Activated CD8-positive, alpha-beta T cell treated with anti-CD3 and anti-CD28 coated beads, Interleukin-2, amount 10 ng/mL, durations not matched to agents 7 days and 5 days (primary cell): ENCODE measurements at regions of chr13 and their contacts with region 1.

Region 1: GRCh38 chr13:99386911-99387788 is 80.0 kb upstream of the GPR183 start:
- DNase-seq: peak; percentile 88
- ATAC-seq: peak; percentile 26
- H3K4me3 Mint-ChIP-seq: no peak overlapping the region
- H3K27ac Mint-ChIP-seq: peak overlapping the region; percentile 58
- H3K4me1 Mint-ChIP-seq: peaks cover 64% of the 10 kb centered on the region
- H3K27me3 Mint-ChIP-seq: no peaks in the 10 kb centered on the region

Region 2: DNA sequence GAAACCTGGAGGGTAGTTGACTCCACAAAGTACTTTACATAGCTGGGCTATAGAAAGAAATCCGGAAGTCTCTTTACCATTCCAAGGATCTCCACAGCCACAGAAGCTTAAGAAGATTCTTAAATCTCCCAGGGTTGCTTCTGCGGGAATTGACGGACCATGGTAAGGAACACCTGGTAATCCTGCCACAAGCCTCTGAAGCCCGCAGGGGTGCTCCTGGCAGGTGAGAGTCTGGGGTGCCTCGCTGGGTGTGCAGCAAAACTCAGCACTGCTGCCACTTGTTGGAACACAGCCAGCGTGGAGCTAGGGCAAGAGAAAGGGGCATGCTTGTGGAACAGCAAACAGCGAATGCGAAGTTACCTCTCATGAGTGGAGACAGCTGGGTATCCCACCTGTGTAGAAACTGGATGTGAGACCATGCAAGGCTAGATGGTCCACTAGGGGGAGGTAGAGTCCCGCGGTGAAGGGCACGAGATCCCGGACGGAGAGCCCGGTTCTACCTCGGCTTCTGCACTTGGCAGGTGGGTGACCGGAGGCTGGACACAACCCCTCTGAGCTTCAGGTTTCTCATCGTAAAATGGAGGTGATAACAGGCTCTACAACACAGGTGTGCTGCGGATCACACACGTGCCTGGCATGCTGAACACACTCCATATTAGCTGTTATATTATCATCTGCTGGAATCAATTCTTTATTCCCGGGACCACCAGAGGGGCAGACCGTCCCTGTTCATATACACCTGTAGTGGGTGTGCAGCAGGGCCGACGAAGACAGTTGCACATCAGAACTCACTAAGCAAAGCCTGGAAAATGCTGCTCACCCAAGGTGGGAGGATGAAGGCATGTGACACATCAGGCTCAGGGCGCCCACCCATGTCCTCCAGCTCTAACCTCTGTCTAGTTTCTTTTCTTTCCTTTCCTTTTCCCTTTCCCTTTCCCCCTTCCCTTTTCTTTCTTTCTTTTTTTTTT is 210.6 kb before region 1 on chr13:
- CTCF ChIA-PET with region 1: interaction called, 18 read pairs
- POLR2A ChIA-PET with region 1: no interaction called
- DNase-seq: peak; percentile 88
- ATAC-seq: peak; percentile 93
- H3K4me3 Mint-ChIP-seq: peak overlapping the region; percentile 35
- H3K27ac Mint-ChIP-seq: peak overlapping the region; percentile 28
- H3K4me1 Mint-ChIP-seq: peaks cover 38% of the 10 kb centered on the region
- H3K27me3 Mint-ChIP-seq: peaks cover 5% of the 10 kb centered on the region

Region 3: DNA sequence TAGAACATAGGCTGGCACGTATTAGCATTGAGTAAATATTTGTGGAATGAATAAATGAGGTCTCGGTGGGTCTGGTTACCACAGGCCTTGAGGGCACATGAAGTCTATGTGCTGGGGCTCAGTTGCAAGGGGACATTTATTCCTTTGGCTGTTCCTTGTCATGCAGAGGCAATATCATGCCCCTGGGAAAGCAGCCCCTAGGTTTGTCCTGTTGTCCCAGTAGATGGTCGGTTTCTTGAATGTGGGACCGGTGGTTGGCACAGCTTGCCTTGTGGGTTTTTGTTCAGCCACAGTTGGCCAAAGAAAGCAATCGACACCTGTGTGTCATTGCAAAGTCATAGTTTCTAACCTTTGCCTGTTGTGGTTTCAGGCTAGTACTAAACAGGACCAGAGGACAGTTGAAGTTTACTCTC is 55.3 kb before region 1 on chr13:
- CTCF ChIA-PET with region 1: interaction called, 19 read pairs
- POLR2A ChIA-PET with region 1: no interaction called
- DNase-seq: no peak
- ATAC-seq: peak; percentile 39
- H3K4me3 Mint-ChIP-seq: no peak overlapping the region
- H3K27ac Mint-ChIP-seq: peak overlapping the region; percentile 36
- H3K4me1 Mint-ChIP-seq: peaks cover 32% of the 10 kb centered on the region
- H3K27me3 Mint-ChIP-seq: no peaks in the 10 kb centered on the region

Region 4: DNA sequence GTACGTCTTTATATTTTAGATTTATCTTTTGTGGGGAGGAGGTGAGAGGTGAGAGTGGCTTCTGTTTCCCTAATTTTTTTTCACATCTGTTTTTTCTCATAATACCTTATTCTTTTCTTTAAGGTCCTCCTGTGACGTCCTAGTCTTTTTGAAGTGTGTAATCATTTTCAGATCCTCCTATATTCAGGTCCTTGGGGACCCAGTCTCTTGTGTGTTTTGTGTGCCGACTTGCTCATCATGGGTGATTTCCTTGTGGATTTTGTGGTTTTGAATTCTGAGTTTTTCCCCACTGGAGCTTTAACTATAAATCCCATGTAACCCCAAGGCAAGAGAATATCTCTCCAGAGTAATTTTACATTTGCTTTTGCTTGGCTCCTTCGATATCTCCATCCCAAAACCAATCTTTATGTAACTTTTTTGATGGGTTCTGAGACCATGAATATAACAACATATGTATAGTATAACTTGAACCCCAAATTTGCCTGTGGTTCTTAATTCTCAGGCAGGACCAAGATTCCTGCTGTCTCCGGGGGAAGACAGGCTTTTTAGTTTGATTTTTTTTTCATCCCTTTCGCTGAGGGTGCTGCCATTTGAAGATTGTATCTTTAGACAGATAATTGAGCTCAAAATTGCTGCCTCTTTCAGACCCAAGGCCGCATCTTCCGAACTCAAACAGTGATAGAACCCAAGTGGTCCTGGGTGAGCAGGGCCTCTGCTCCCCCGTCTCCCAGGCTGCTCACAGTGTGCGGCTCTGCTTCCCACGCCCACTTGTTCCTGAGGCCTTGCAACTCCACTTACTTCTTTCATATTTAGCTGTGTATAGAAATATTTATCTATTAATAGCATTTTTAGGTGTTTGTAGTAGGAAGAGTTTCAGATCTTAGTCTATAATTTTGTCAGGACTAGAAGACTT is 20.8 kb before region 1 on chr13:
- CTCF ChIA-PET with region 1: interaction called, 37 read pairs
- POLR2A ChIA-PET with region 1: no interaction called
- DNase-seq: peak; percentile 19
- ATAC-seq: no peak
- H3K4me3 Mint-ChIP-seq: no peak overlapping the region
- H3K27ac Mint-ChIP-seq: peak overlapping the region; percentile 10
- H3K4me1 Mint-ChIP-seq: peaks cover 69% of the 10 kb centered on the region
- H3K27me3 Mint-ChIP-seq: no peaks in the 10 kb centered on the region

Region 5: GRCh38 chr13:99406799-99407201 is 19.6 kb after region 1 on chr13:
- CTCF ChIA-PET with region 1: interaction called, 25 read pairs
- POLR2A ChIA-PET with region 1: no interaction called
- DNase-seq: no peak
- ATAC-seq: no peak
- H3K4me3 Mint-ChIP-seq: no peak overlapping the region
- H3K27ac Mint-ChIP-seq: no peak overlapping the region
- H3K4me1 Mint-ChIP-seq: peaks cover 22% of the 10 kb centered on the region
- H3K27me3 Mint-ChIP-seq: no peaks in the 10 kb centered on the region

Region 6: DNA sequence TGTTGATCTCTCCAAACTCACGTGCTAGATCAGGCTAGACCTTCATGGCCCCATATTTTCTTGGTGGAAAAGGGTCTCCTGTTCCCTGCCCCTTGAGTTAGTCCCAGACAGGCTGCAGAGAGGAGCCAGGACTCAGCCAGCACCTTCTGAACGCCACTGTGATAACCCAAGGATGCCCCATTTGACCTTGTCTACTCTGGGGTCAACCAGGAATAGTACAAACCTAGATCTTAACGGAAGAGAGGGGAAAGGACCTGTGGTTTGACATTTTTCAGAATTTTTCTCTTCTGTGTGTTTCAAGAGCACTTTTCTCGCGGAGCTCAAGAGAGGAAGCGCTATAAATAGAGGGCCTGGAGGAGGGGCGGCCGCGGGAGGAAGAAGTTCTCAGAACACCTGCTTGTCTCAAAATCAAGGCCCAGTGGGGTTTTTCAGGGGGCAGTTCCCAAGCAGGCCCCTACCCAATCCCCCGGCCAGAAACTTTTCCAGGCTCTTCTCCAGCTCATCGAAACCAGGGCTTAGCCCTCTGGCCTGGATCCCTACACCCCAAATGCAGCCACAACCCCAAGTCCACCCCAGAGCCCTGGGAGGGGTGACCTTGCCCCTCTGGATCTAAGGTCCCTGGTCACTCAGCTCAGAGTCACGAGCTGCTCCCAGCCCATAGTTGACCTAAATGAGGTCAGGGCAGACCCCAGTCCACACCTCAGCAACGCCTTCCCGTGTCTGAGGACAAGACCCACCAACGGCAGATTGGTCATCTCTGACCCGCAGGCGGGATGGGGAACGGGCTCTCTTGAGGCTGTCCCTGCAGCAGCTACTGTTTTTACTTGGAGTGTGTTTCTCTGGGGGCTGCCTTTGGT is 38.6 kb after region 1 on chr13:
- CTCF ChIA-PET with region 1: interaction called, 44 read pairs
- POLR2A ChIA-PET with region 1: interaction called, 3 read pairs
- DNase-seq: peak; percentile 78
- ATAC-seq: peak; percentile 64
- H3K4me3 Mint-ChIP-seq: peak overlapping the region; percentile 64
- H3K27ac Mint-ChIP-seq: peak overlapping the region; percentile 89
- H3K4me1 Mint-ChIP-seq: peaks cover 75% of the 10 kb centered on the region
- H3K27me3 Mint-ChIP-seq: no peaks in the 10 kb centered on the region